B cell (primary cell): ENCODE measurements at regions of chr3 and their contacts with region 1.

Region 1: DNA sequence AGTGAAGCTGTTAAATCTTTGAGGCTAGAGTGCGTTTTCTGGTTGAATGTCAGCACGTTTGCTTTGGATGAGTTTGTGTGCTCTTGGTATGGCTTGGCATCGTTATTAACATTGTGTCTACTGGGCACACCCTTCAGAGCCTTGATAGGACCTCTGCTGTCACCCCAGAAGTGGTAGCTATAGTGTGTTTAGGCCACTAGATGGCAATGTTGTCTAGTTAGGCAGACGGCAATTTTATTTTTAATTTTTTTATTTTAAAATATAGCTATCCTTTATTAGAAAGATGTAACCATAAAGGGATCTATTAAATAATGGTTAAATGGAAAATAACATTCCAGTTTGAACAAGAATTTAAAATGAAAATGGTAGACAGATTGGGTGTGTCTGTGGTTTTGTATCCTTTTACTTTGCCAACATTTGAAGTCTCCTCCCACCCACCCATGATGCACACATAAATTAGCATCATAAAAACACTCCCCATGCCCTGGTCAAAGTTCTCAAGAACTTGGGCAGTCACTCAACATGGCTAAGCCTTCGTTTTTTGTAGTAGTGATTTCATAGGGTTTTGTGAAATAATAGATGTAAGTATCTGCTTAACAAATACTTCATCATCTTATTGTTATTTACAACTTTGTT is 200.7 kb downstream of the KCNH8 start:
- DNase-seq: peak; percentile 60
- ATAC-seq: peak; percentile 76
- H3K4me3 ChIP-seq: peak overlapping the region in 4 of 5 experiments; percentile 23 to 61 (median 42)
- H3K4me3 Mint-ChIP-seq: peak overlapping the region; percentile 80
- H3K27ac ChIP-seq: peak overlapping the region; percentile 75 to 77
- H3K27ac Mint-ChIP-seq: peak overlapping the region; percentile 96
- H3K4me1 ChIP-seq: peaks cover 30 to 38% of the 10 kb centered on the region in 2 donors
- H3K4me1 Mint-ChIP-seq: peaks cover 44% of the 10 kb centered on the region
- H3K27me3 ChIP-seq: no peaks in the 10 kb centered on the region
- H3K27me3 Mint-ChIP-seq: no peaks in the 10 kb centered on the region
- CTCF ChIP-seq: peak; percentile 83

Region 2: GRCh38 chr3:18024715-18025114 is 1324.3 kb before region 1 on chr3:
- CTCF ChIA-PET with region 1: no interaction called
- POLR2A ChIA-PET with region 1: no interaction called
- intact Hi-C with region 1: no loop called
- DNase-seq: no peak
- ATAC-seq: no peak
- H3K4me3 ChIP-seq: no peak overlapping the region
- H3K4me3 Mint-ChIP-seq: no peak overlapping the region
- H3K27ac ChIP-seq: no peak overlapping the region
- H3K27ac Mint-ChIP-seq: no peak overlapping the region
- H3K4me1 ChIP-seq: peaks cover 18 to 29% of the 10 kb centered on the region in 2 donors
- H3K4me1 Mint-ChIP-seq: peaks cover 21% of the 10 kb centered on the region
- H3K27me3 ChIP-seq: peaks cover 0 to 3% (median 0%) of the 10 kb centered on the region in 4 experiments
- H3K27me3 Mint-ChIP-seq: peaks cover 17% of the 10 kb centered on the region
- CTCF ChIP-seq: no peak

Region 3: DNA sequence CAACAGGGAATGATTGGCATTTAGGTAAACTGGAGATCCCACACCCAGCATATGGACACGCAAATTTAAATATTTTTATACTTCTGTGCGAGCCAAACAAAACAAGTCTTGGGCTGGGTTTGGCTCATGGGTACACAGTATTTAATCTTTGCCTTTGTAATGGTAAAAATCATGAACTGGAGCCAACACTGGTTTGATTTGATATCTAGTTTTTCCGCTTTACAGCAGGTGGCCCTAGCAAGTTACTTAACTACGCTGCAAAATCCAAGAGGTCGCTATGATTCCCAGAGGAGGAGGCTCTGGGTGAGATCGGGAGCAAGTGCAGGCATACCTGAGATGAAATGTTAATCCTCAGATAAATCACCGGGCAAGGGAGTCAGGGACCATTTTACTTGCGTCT is 716.0 kb before region 1 on chr3:
- CTCF ChIA-PET with region 1: no interaction called
- POLR2A ChIA-PET with region 1: no interaction called
- intact Hi-C with region 1: no loop called
- DNase-seq: no peak
- ATAC-seq: no peak
- H3K4me3 ChIP-seq: no peak overlapping the region
- H3K4me3 Mint-ChIP-seq: no peak overlapping the region
- H3K27ac ChIP-seq: no peak overlapping the region
- H3K27ac Mint-ChIP-seq: no peak overlapping the region
- H3K4me1 ChIP-seq: no peaks in the 10 kb centered on the region
- H3K4me1 Mint-ChIP-seq: no peaks in the 10 kb centered on the region
- H3K27me3 ChIP-seq: peaks cover 0 to 5% (median 0%) of the 10 kb centered on the region in 4 experiments
- H3K27me3 Mint-ChIP-seq: peaks cover 3% of the 10 kb centered on the region
- CTCF ChIP-seq: no peak

Region 4: DNA sequence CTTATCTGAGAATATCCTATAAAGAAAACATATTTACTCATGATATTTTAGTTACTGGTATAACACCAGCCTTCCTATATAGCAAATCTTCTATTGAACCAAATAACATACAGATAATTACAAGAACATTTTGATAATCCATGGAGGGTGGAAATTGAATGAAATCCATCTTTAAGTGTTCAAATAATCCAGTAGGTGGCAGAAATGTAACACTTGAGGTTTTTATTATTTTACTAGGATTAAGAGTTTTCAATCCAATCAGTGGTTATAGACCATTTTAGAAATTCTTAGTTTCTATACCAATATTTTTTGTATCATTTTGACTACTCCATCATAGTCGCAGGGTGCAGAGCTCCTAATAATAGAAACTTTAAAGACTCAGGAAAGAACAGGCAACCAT is 302.6 kb before region 1 on chr3:
- CTCF ChIA-PET with region 1: interaction called, 3 read pairs
- POLR2A ChIA-PET with region 1: no interaction called
- intact Hi-C with region 1: loop called (anchors 5 kb)
- DNase-seq: peak; percentile 8
- ATAC-seq: no peak
- H3K4me3 ChIP-seq: no peak overlapping the region
- H3K4me3 Mint-ChIP-seq: no peak overlapping the region
- H3K27ac ChIP-seq: no peak overlapping the region
- H3K27ac Mint-ChIP-seq: no peak overlapping the region
- H3K4me1 ChIP-seq: no peaks in the 10 kb centered on the region
- H3K4me1 Mint-ChIP-seq: no peaks in the 10 kb centered on the region
- H3K27me3 ChIP-seq: no peaks in the 10 kb centered on the region
- H3K27me3 Mint-ChIP-seq: no peaks in the 10 kb centered on the region
- CTCF ChIP-seq: peak; percentile 49

Region 5: GRCh38 chr3:19146685-19147650 is 202.1 kb before region 1 on chr3:
- CTCF ChIA-PET with region 1: interaction called, 9 read pairs
- POLR2A ChIA-PET with region 1: no interaction called
- intact Hi-C with region 1: loop called (anchors 2 kb)
- DNase-seq: peak; percentile 89
- ATAC-seq: peak; percentile 63
- H3K4me3 ChIP-seq: peak overlapping the region; percentile 49 to 84 (median 68)
- H3K4me3 Mint-ChIP-seq: peak overlapping the region; percentile 95
- H3K27ac ChIP-seq: peak overlapping the region; percentile 50 to 80
- H3K27ac Mint-ChIP-seq: peak overlapping the region; percentile 91
- H3K4me1 ChIP-seq: peaks cover 18 to 22% of the 10 kb centered on the region in 2 donors
- H3K4me1 Mint-ChIP-seq: peaks cover 24% of the 10 kb centered on the region
- H3K27me3 ChIP-seq: peaks cover 0 to 5% (median 2%) of the 10 kb centered on the region in 4 experiments
- H3K27me3 Mint-ChIP-seq: peaks cover 13% of the 10 kb centered on the region
- CTCF ChIP-seq: peak; percentile 72

Region 6: GRCh38 chr3:19229086-19229485 is 120.0 kb before region 1 on chr3:
- CTCF ChIA-PET with region 1: interaction called, 13 read pairs
- POLR2A ChIA-PET with region 1: no interaction called
- intact Hi-C with region 1: no loop called
- DNase-seq: peak; percentile 12
- ATAC-seq: no peak
- H3K4me3 ChIP-seq: peak overlapping the region in 2 of 5 experiments; percentile 13 to 41
- H3K4me3 Mint-ChIP-seq: peak overlapping the region; percentile 69
- H3K27ac ChIP-seq: peak overlapping the region in 1 of 2 donors; percentile 58
- H3K27ac Mint-ChIP-seq: peak overlapping the region; percentile 93
- H3K4me1 ChIP-seq: peaks cover 16% of the 10 kb centered on the region in 2 donors
- H3K4me1 Mint-ChIP-seq: peaks cover 20% of the 10 kb centered on the region
- H3K27me3 ChIP-seq: no peaks in the 10 kb centered on the region
- H3K27me3 Mint-ChIP-seq: peaks cover 4% of the 10 kb centered on the region
- CTCF ChIP-seq: no peak

Region 7: DNA sequence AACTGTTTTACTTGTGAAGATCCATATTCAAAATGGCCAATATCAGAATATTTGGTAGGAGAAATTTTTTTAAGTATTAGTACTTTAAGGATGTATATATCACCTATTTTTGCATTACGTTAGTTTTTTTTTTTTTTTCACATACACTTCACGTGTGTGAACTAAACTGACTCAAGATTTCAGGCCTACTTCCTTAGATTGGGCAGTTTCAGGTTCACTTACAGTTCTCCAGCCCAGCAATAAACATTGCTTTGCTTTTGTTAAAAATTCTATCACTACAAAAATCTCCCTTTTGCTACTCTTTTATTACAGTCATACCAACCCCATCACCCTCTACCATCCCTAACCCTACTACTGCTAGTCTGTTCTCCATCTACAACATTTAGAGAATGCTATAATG is 17.1 kb before region 1 on chr3:
- CTCF ChIA-PET with region 1: no interaction called
- POLR2A ChIA-PET with region 1: no interaction called
- intact Hi-C with region 1: no loop called
- DNase-seq: no peak
- ATAC-seq: no peak
- H3K4me3 ChIP-seq: no peak overlapping the region
- H3K4me3 Mint-ChIP-seq: no peak overlapping the region
- H3K27ac ChIP-seq: no peak overlapping the region
- H3K27ac Mint-ChIP-seq: no peak overlapping the region
- H3K4me1 ChIP-seq: peaks cover 0 to 4% of the 10 kb centered on the region in 2 donors
- H3K4me1 Mint-ChIP-seq: peaks cover 4% of the 10 kb centered on the region
- H3K27me3 ChIP-seq: no peaks in the 10 kb centered on the region
- H3K27me3 Mint-ChIP-seq: no peaks in the 10 kb centered on the region
- CTCF ChIP-seq: no peak

Region 8: DNA sequence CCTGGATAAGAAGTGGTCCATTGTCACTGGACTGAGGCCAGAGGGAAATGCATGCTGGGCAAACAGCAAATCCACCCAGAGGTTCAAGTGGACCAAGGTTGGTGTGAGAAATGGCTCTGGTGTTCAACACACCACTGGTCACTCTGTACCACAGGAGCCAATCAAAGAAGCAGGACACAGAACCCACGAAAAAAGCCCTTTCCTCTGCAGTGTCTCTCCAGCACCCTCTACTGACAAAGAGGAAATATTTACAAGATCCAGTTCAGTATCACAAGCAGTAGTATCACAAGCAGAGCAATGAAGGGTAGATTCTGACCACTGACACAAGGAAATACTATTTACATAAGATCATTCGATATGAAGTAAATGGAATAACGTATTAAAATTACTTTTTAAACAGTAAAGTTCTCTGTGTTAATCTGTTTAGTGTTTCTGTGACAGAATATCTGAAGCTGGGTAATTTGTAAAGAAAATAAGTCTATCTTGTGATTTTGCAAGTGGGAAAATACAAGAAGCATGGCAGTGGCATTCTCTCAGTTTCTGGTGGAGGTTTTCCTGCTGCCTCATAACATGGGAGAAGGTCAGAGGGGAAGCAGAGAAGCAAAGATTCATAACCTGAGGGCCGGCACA is 194.3 kb after region 1 on chr3:
- CTCF ChIA-PET with region 1: interaction called, 25 read pairs
- POLR2A ChIA-PET with region 1: no interaction called
- intact Hi-C with region 1: loop called (anchors 1 kb)
- DNase-seq: peak; percentile 59
- ATAC-seq: peak; percentile 53
- H3K4me3 ChIP-seq: peak overlapping the region in 2 of 5 experiments; percentile 17 to 36
- H3K4me3 Mint-ChIP-seq: peak overlapping the region; percentile 16
- H3K27ac ChIP-seq: peak overlapping the region; percentile 93
- H3K27ac Mint-ChIP-seq: peak overlapping the region; percentile 60
- H3K4me1 ChIP-seq: peaks cover 55 to 56% of the 10 kb centered on the region in 2 donors
- H3K4me1 Mint-ChIP-seq: peaks cover 64% of the 10 kb centered on the region
- H3K27me3 ChIP-seq: no peaks in the 10 kb centered on the region
- H3K27me3 Mint-ChIP-seq: no peaks in the 10 kb centered on the region
- CTCF ChIP-seq: peak; percentile 81

Region 9: GRCh38 chr3:19946832-19947548 is 597.9 kb after region 1 on chr3 and contains the start of gene RAB5A:
- CTCF ChIA-PET with region 1: no interaction called
- POLR2A ChIA-PET with region 1: no interaction called
- intact Hi-C with region 1: loop called (anchors 5 kb)
- DNase-seq: peak; percentile 99
- ATAC-seq: peak; percentile 85
- H3K4me3 ChIP-seq: peak within 1 kb of the TSS; percentile 71 to 95 (median 87)
- H3K4me3 Mint-ChIP-seq: peak within 1 kb of the TSS; percentile 93
- H3K27ac ChIP-seq: peak within 1 kb of the TSS; percentile 96 to 98
- H3K27ac Mint-ChIP-seq: peak within 1 kb of the TSS; percentile 97
- H3K4me1 ChIP-seq: peaks cover 18 to 22% of the 10 kb centered on the region in 2 donors
- H3K4me1 Mint-ChIP-seq: peaks cover 47% of the 10 kb centered on the region
- H3K27me3 ChIP-seq: no peaks in the 10 kb centered on the region
- H3K27me3 Mint-ChIP-seq: no peaks in the 10 kb centered on the region
- CTCF ChIP-seq: no peak
- total RNA-seq, gene RAB5A: 59.4 and 61.9 TPM in 2 replicates

Region 10: DNA sequence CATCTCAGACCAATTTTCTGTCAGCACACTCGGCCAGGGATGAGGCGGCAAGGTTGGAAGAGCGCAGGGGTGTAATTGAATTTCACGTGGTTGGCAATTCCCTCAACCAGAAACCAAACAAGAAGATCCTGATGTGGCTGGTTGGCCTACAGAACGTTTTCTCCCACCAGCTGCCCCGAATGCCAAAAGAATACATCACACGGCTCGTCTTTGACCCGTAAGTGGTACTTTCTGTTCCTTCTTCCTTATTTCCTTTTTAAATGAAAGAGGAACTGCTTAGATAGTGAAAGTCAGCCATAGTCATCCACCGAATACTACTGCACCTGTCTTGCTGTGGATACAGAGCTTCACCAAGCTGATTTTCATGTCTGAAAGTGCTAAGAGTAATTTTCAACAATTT is 776.9 kb after region 1 on chr3:
- CTCF ChIA-PET with region 1: no interaction called
- POLR2A ChIA-PET with region 1: no interaction called
- intact Hi-C with region 1: loop called (anchors 5 kb)
- DNase-seq: peak; percentile 91
- ATAC-seq: peak; percentile 97
- H3K4me3 ChIP-seq: peak overlapping the region; percentile 2 to 51 (median 11)
- H3K4me3 Mint-ChIP-seq: peak overlapping the region; percentile 78
- H3K27ac ChIP-seq: peak overlapping the region; percentile 93 to 94
- H3K27ac Mint-ChIP-seq: peak overlapping the region; percentile 95
- H3K4me1 ChIP-seq: peaks cover 28 to 36% of the 10 kb centered on the region in 2 donors
- H3K4me1 Mint-ChIP-seq: peaks cover 36% of the 10 kb centered on the region
- H3K27me3 ChIP-seq: no peaks in the 10 kb centered on the region
- H3K27me3 Mint-ChIP-seq: no peaks in the 10 kb centered on the region
- CTCF ChIP-seq: no peak